ENCODE measurements at regions of chr16 and their contacts with region 1.

Region 1: GRCh38 chr16:89507834-89508590 is at the start of gene SPG7:
- DNase-seq: peak; percentile 81 to 94 (median 88)
- H3K4me3 ChIP-seq: peak within 1 kb of the TSS; percentile 83
- H3K27ac ChIP-seq: peak within 1 kb of the TSS; percentile 56 to 93
- H3K4me1 ChIP-seq: peaks cover 13% of the 10 kb centered on the region
- H3K27me3 ChIP-seq: no peaks in the 10 kb centered on the region
- CTCF ChIP-seq: peak in 2 of 3 donors; percentile 14 to 23
- EP300 ChIP-seq: no peak
- POLR2A ChIP-seq: peak; percentile 80
- total RNA-seq, gene SPG7: 73.5 to 145 (median 96.0) TPM

Region 2: DNA sequence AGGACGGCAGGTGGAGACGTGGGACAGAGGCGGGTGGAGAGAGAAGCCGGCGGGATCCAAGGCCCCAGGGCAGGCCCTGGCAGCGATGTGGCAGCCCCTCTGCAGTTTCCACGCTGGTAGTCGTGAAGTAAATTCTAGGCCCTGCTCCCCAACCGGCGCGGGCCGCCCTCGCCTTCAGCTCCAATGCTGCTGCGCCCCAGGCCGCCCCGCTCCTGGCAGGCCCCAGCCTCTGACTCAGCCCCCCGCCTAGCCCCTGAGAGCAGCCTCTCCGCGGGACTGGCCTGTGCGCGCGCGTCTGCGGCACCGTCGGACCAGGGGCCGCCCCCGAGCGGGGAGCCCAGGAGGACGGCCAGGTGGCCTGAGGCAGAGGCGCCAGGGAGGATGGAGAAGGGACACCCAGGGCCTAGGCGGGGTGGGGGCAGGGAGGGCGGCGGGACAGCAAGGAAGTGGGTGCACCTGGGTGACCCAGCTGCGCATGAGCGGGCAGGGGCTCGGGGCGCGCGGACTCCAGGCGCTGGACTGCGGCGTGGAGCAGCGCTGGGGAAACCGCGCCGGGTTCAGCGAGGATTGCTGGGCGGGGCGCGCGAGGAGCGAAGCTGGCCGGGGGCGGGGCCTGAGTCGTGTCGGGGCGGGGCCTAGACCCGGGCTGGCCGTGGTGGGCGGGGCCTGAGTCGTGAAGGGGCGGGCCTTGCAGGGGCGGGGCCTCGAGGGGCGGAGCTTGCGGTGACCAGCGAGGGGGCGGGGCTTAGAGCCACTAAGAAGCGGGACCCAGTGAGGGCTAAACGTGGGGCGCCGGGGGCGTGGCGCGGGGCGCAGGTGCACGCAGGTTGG is 260.9 kb before region 1 on chr16:
- intact Hi-C with region 1: loop called in 1 of 4 experiments (anchors 2 kb)
- DNase-seq: peak; percentile 92 to 98 (median 96)
- H3K4me3 ChIP-seq: peak overlapping the region; percentile 34
- H3K27ac ChIP-seq: peak overlapping the region in 1 of 2 donors; percentile 6
- H3K4me1 ChIP-seq: peaks cover 5% of the 10 kb centered on the region
- H3K27me3 ChIP-seq: no peaks in the 10 kb centered on the region
- CTCF ChIP-seq: no peak
- EP300 ChIP-seq: no peak
- POLR2A ChIP-seq: no peak

Region 3: GRCh38 chr16:89442990-89443731 is 64.9 kb before region 1 on chr16:
- intact Hi-C with region 1: no loop called
- DNase-seq: peak in 3 of 5 donors; percentile 39 to 61 (median 56)
- H3K4me3 ChIP-seq: no peak overlapping the region
- H3K27ac ChIP-seq: peak overlapping the region in 1 of 2 donors; percentile 60
- H3K4me1 ChIP-seq: peaks cover 39% of the 10 kb centered on the region
- H3K27me3 ChIP-seq: no peaks in the 10 kb centered on the region
- CTCF ChIP-seq: no peak
- EP300 ChIP-seq: no peak
- POLR2A ChIP-seq: no peak

Measured in ovary (tissue), 10 donors.